ENCODE measurements at regions of chr20 and their contacts with region 1.

Region 1: DNA sequence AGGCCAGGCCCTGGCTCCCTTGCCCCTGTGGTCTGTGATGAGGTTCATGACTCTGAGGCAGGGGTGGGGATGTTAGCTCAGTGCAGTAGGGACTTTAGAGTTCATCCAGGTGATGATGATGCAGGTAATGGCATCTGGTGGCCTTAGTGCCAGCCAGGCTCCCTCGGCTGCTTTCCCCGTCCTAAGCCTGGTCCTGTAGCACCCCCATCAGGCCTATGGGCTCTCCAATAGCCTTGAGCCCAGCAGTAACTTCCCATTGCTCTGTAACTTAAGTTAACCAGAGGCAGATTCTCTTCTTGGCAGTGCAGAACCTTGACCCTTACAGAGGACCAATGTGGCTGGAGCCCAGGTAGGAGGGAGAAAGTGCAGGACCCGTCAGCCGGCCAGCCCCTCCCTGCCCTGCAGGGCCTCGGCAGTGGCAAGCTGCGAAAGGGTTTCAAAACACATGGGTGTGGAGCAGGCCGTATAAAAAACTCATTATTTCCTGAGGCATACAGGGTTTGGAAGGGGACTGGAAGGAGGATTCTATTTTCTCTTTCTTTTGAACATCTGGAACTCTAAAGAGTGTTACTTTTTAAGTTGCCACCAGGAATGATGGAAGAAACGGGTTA is 406.9 kb downstream of the CDH26 start:
- DNase-seq: peak; percentile 11
- H3K4me3 Mint-ChIP-seq: no peak overlapping the region
- H3K27ac Mint-ChIP-seq: no peak overlapping the region
- H3K4me1 Mint-ChIP-seq: no peaks in the 10 kb centered on the region
- H3K27me3 Mint-ChIP-seq: no peaks in the 10 kb centered on the region
- CTCF ChIP-seq: no peak

Region 2: DNA sequence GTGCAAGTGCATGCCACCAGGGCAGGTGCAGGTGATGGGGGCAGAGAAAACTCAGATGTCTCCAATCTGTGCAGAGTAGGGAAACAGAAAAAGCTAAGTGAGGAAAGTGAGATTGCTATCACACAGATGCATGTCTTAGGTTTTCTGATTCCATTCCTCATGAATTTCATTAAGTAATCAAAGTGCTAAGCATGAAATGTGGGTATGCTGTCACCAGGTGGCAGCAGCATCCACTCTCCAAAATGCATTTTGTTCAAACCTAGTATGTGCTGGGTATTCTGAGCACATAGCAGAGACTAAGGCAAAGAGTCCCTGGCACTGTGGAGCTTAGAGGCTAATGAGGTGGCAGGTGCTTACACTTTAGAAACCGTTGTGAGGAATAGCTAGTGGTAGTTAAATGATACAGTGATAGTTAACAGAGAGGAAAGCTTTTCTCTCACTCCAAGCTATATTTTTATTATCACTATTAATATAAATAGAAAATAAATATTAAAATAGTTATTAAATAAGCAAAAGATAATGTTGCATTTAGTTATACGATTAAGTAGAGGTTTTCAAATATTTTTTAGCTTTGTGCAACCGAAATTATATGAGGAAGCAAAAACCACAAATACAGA is 227.4 kb before region 1 on chr20:
- CTCF ChIA-PET with region 1: no interaction called
- intact Hi-C with region 1: loop called (anchors 10 kb)
- DNase-seq: peak; percentile 58
- H3K4me3 Mint-ChIP-seq: peak overlapping the region; percentile 79
- H3K27ac Mint-ChIP-seq: no peak overlapping the region
- H3K4me1 Mint-ChIP-seq: peaks cover 2% of the 10 kb centered on the region
- H3K27me3 Mint-ChIP-seq: peaks cover 18% of the 10 kb centered on the region
- CTCF ChIP-seq: peak; percentile 50

Region 3: GRCh38 chr20:60254854-60255411 is 110.2 kb before region 1 on chr20:
- CTCF ChIA-PET with region 1: no interaction called
- intact Hi-C with region 1: loop called (anchors 10 kb)
- DNase-seq: no peak
- H3K4me3 Mint-ChIP-seq: no peak overlapping the region
- H3K27ac Mint-ChIP-seq: no peak overlapping the region
- H3K4me1 Mint-ChIP-seq: peaks cover 17% of the 10 kb centered on the region
- H3K27me3 Mint-ChIP-seq: no peaks in the 10 kb centered on the region
- CTCF ChIP-seq: no peak

Measured in Calu3 (cell line).